Calu3 (cell line): ENCODE measurements at regions of chr1 and their contacts with region 1.

Region 1: GRCh38 chr1:219244864-219245263 is 71.2 kb downstream of the LYPLAL1 start:
- DNase-seq: no peak
- H3K4me3 Mint-ChIP-seq: no peak overlapping the region
- H3K27ac Mint-ChIP-seq: no peak overlapping the region
- H3K4me1 Mint-ChIP-seq: peaks cover 9% of the 10 kb centered on the region
- H3K27me3 Mint-ChIP-seq: no peaks in the 10 kb centered on the region
- CTCF ChIP-seq: no peak

Region 2: DNA sequence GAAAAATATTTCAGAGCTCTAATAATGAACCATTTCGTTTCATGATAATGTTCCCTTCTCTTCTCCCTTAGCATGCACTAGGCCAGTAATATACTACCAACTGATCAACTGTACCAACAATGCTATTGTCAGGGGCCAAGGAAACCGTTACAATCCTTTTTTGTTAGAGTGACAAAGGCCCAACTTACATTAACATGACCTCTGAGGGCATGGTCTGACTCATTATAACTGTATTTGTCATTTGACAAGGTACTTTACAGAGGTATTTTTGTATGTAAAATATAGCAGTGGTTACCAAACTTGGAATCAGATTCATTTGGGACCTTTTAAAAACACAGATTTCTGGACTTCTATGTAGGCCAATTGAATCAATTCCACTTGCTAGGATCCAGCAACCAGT is 1062.4 kb before region 1 on chr1:
- CTCF ChIA-PET with region 1: interaction called, 10 read pairs
- intact Hi-C with region 1: no loop called
- DNase-seq: no peak
- H3K4me3 Mint-ChIP-seq: no peak overlapping the region
- H3K27ac Mint-ChIP-seq: no peak overlapping the region
- H3K4me1 Mint-ChIP-seq: no peaks in the 10 kb centered on the region
- H3K27me3 Mint-ChIP-seq: no peaks in the 10 kb centered on the region
- CTCF ChIP-seq: no peak